ENCODE measurements at regions of chr6 and their contacts with region 1.

Region 1: DNA sequence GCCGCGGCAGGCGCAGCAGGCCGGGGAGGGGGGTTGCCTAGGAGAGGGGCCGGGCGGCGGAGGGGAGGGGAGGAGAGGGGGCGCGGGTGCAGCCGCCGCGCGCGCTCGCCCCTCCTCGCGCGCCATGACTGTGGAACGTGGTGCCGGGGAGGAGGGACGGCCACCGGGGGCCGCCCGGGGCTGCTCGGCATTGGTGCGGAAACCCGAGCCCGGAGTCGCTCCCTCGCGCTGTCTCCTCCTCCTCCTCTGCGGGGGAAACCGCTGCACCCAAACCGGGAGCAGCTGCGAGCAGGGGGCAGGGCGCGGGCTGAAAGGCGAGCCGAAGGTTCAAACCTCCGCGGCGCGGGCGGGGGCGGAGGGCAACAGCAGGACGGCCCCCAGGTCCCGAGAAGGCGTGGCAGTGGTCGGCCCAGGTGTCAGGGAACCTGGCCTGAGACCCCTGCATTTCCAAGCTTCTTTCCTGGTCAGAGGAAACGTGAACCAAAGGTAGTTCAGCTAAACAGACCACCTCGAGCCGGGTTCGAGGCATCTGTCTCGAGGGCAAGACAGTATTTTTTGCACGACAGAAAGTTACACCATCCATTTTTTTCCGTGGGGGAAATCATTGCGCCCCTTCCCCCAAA is 1.4 kb upstream of the TRERF1 start:
- DNase-seq: peak; percentile 43
- ATAC-seq: peak; percentile 74
- H3K4me3 Mint-ChIP-seq: peak overlapping the region; percentile 90
- H3K27ac Mint-ChIP-seq: no peak overlapping the region
- H3K4me1 Mint-ChIP-seq: peaks cover 35% of the 10 kb centered on the region
- H3K27me3 Mint-ChIP-seq: peaks cover 3% of the 10 kb centered on the region
- CTCF ChIP-seq: no peak

Region 2: DNA sequence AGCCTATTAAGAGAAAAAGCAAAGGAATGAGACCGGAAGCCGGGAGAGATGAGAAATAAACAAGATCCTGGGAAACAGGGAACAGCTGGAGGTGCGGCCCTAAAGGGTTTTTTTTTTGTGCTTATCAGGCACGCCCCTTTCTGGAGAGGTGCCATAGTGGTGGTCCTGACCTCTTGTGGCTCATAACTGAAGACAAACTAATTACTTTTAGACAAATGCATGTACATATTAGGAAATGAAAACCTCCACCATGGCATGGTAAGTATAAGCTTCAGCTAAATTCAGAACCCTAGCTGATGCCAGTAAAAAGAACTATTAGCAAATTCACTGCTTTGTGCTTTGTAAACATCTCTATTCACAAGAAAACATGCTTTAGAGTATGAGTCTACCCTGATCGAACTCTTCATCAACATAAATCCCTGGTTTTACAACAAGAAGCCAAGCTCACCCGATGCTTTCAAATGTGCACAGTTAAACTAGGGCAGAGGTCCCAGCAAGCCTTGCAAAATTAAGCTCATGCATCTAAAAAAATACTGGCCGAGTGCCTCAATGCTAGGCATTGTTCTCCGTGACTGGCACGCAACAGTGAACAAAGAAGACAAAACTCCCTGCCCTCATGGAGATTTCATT is 139.1 kb before region 1 on chr6:
- CTCF ChIA-PET with region 1: no interaction called
- POLR2A ChIA-PET with region 1: no interaction called
- intact Hi-C with region 1: loop called (anchors 5 kb)
- DNase-seq: no peak
- ATAC-seq: no peak
- H3K4me3 Mint-ChIP-seq: no peak overlapping the region
- H3K27ac Mint-ChIP-seq: no peak overlapping the region
- H3K4me1 Mint-ChIP-seq: peaks cover 17% of the 10 kb centered on the region
- H3K27me3 Mint-ChIP-seq: no peaks in the 10 kb centered on the region
- CTCF ChIP-seq: no peak

Region 3: GRCh38 chr6:42367353-42368011 is 85.7 kb before region 1 on chr6:
- CTCF ChIA-PET with region 1: no interaction called
- POLR2A ChIA-PET with region 1: interaction called, 10 read pairs
- intact Hi-C with region 1: no loop called
- DNase-seq: peak; percentile 25
- ATAC-seq: peak; percentile 83
- H3K4me3 Mint-ChIP-seq: peak overlapping the region; percentile 76
- H3K27ac Mint-ChIP-seq: peak overlapping the region; percentile 79
- H3K4me1 Mint-ChIP-seq: peaks cover 45% of the 10 kb centered on the region
- H3K27me3 Mint-ChIP-seq: no peaks in the 10 kb centered on the region
- CTCF ChIP-seq: no peak

Region 4: GRCh38 chr6:42520786-42521607 is 67.9 kb after region 1 on chr6:
- CTCF ChIA-PET with region 1: no interaction called
- POLR2A ChIA-PET with region 1: interaction called, 9 read pairs
- intact Hi-C with region 1: loop called (anchors 5 kb)
- DNase-seq: no peak
- ATAC-seq: peak; percentile 92
- H3K4me3 Mint-ChIP-seq: peak overlapping the region; percentile 71
- H3K27ac Mint-ChIP-seq: peak overlapping the region; percentile 99
- H3K4me1 Mint-ChIP-seq: peaks cover 22% of the 10 kb centered on the region
- H3K27me3 Mint-ChIP-seq: no peaks in the 10 kb centered on the region
- CTCF ChIP-seq: no peak

Region 5: DNA sequence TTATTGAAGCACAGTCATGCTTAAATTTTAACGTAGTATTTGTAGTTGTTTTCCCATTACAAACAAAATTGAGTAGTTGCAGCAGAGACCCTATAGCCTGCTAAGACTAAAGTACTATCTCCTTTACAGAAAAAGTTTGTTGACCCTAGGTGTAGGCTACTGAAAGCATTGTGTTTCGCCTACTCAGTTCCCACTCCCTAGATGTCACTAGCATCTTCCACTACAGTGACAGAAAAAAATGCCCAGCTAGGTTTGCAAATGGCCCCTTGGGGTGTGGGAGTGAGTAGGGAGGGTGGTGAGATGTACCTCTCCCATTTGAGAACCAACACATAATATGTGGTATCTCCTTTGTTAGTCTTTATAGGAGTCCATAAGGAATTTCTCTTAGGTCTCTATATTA is 145.2 kb after region 1 on chr6:
- CTCF ChIA-PET with region 1: no interaction called
- POLR2A ChIA-PET with region 1: no interaction called
- intact Hi-C with region 1: no loop called
- DNase-seq: no peak
- ATAC-seq: no peak
- H3K4me3 Mint-ChIP-seq: no peak overlapping the region
- H3K27ac Mint-ChIP-seq: no peak overlapping the region
- H3K4me1 Mint-ChIP-seq: peaks cover 3% of the 10 kb centered on the region
- H3K27me3 Mint-ChIP-seq: no peaks in the 10 kb centered on the region
- CTCF ChIP-seq: no peak